ENCODE measurements at regions of chr19 and their contacts with region 1.

Region 1: DNA sequence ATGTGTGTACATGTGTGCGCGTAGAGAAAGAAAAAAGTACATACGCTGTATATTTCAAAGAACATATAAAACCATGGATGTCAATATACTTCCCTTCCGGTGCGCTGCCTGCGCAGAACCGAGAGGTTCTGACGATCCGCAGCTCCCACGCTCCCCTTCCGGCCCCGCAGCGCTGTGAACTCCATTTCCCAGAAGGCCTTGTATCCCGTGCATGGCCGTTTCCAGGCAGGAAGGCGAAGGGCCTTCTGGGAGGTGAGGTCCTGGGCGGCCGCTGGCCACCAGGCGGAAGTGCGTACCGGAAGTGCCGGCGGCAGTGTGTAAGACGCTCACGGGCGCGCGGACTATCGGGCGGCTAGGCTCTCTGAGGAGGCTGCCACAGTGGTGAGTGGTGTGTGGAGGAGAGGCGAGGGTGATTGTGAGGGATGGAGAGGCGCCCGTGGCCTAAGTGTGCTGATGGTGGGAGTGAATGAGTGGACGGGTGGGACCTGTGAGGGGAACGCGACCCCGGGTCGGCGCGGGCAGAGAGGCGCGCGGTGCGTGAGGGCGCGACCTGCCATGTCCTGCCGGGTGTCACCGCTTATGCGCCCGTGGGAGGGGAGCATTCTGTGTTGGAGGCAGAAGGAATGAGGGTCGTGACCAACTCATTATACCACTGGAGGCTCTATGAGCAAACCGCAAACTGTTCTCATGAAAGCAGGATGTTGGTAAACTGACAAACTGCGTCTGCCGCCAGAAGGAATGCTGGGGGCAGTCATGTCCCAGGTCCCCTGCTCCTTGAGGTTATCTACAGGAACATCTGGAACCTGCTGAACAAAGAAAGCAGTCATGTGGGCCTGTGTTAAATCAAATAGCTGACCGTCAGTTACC is at the start of gene ERVK3-1:
- DNase-seq: peak; percentile 95
- H3K4me3 Mint-ChIP-seq: peak within 1 kb of the TSS; percentile 97
- H3K27ac Mint-ChIP-seq: peak within 1 kb of the TSS; percentile 96
- H3K4me1 Mint-ChIP-seq: peaks cover 43% of the 10 kb centered on the region
- H3K27me3 Mint-ChIP-seq: no peaks in the 10 kb centered on the region
- total RNA-seq, gene ERVK3-1: 87.1 and 96.7 TPM in 2 replicates

Region 2: DNA sequence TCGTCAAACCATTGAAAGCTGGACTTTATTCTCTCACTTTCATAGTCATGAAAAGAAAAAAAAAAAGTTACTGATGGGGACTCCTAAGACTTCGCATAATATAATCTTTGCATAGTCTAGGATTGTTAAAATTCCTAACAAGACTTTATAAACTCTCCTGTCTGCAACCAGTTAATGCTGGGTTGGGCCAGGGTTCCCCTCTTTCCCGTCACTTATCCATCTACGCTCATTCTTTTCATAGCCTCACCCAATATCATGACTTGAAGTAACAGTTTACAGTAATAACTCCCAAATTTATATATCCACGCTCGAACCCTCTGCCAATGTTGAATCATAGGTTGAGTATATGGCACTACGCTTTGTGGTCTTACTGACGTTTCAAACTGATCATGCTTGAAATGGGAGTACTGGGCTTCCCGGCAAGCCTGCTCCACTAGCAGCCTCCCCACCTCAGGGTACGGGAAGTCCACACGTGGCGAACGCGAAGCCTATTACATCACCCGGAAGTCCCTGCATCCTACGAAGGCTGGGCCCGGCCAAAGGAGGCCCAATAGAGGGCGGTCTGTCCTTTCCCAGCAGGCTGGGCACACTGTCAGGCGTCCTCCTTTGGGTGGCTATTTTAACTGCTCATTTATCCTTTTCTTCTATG is 1025.8 kb before region 1 on chr19:
- intact Hi-C with region 1: loop called (anchors 10 kb)
- DNase-seq: peak; percentile 75
- H3K4me3 Mint-ChIP-seq: no peak overlapping the region
- H3K27ac Mint-ChIP-seq: no peak overlapping the region
- H3K4me1 Mint-ChIP-seq: peaks cover 23% of the 10 kb centered on the region
- H3K27me3 Mint-ChIP-seq: peaks cover 2% of the 10 kb centered on the region

Region 3: DNA sequence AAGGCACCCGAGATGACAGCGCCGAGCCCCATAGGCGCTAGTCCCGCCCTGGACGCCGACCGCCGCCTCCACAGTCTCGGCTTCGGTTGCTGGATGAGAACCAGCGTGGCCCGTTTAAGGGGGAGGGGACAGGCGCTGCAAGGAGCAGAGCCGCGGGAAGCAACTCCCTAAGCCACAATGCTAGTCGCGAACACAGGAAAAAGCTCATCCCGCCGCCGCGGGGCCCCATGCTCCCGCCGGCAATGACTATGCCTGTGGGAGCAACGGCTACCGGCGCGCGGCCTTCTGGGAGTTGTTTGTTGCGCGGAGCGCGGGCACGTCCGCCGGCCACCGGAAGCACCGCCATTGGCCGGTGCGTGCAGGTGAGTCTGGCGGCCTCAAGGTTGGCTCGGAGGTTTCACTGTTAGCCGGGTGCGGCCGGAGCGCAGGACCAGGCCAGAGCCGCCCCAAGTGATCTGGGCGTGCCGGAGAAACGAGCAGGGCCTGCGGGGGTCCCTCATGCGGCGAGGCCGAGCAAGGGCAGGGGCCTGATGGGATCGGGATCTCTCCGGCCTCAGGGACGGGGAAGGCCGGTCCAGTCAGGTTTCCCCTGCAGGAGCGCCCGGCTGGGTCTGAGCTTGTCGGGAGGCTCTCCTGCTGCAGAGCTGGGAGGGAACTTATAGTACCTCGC is 76.6 kb before region 1 on chr19 and contains the start of gene ZNF544:
- intact Hi-C with region 1: loop called (anchors 1 kb)
- DNase-seq: peak; percentile 60
- H3K4me3 Mint-ChIP-seq: peak within 1 kb of the TSS; percentile 89
- H3K27ac Mint-ChIP-seq: peak within 1 kb of the TSS; percentile 96
- H3K4me1 Mint-ChIP-seq: peaks cover 32% of the 10 kb centered on the region
- H3K27me3 Mint-ChIP-seq: no peaks in the 10 kb centered on the region
- total RNA-seq, gene ZNF544: 51.8 and 56.1 TPM in 2 replicates

Region 4: DNA sequence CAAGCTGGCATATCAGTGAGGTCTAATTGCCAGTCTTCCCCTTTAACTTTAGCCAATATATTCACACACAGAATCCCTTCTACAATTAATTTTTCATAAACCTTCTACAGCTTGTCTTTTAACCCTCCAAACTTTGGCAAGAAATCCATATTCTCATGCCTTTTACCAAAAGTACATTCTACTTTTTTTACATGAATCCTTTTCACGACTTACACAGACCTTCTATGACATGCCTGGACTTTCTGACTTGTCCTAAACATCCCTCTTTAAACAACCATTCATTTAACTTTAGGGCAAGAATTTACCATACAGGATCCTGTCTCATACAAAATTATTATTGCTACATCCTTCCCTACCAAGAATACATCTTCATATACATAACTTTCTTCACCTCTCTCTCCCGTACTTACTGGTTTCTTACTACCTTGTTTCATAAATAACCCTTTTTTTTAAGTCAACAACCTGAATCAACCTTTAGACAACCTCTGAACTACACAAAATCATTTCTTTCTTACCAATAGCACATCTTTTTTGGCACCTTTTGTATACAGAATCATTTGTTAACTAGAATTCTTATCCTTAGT is 53.1 kb before region 1 on chr19:
- intact Hi-C with region 1: no loop called
- DNase-seq: no peak
- H3K4me3 Mint-ChIP-seq: no peak overlapping the region
- H3K27ac Mint-ChIP-seq: no peak overlapping the region
- H3K4me1 Mint-ChIP-seq: no peaks in the 10 kb centered on the region
- H3K27me3 Mint-ChIP-seq: no peaks in the 10 kb centered on the region

Region 5: GRCh38 chr19:58338825-58339558 is 33.7 kb after region 1 on chr19:
- intact Hi-C with region 1: no loop called
- DNase-seq: no peak
- H3K4me3 Mint-ChIP-seq: no peak overlapping the region
- H3K27ac Mint-ChIP-seq: no peak overlapping the region
- H3K4me1 Mint-ChIP-seq: peaks cover 6% of the 10 kb centered on the region
- H3K27me3 Mint-ChIP-seq: no peaks in the 10 kb centered on the region

Region 6: DNA sequence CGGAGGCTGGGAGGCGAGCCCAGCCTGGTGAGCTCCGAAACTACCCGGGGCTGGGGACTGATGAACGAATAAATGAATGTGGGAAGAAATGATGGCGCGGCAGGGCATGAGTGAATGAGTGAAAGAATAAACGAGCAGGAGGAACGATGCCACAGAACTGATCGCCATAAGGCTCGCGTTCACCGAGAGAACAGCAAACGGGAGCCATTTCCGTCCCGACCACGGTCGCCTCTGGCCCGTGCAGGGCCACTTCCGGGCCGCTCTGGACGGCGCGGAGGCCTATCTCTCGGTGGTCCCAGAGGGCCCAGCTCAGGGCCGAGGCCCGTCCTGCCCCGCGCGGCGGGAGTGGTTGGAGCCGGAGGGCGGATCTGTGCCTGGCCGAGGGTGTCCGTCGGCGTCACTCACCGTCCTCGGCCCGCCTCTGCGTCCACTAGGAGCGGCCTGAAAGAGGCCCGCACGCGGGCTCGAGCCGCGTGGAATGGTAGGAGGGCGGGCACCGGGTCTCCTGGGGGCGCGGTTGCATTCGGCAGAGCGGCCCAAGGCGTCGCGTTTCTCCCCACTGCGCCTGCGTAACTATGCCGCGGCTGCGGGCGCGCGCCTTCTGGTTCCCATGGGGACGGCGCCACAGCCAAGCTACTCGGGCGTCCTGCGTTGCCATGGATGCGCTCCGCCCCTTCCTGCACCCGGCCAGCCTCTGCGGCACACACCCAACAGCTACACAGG is 57.1 kb after region 1 on chr19 and contains the start of gene ZNF497:
- intact Hi-C with region 1: loop called (anchors 1 kb)
- DNase-seq: peak; percentile 95
- H3K4me3 Mint-ChIP-seq: peak within 1 kb of the TSS; percentile 94
- H3K27ac Mint-ChIP-seq: peak within 1 kb of the TSS; percentile 95
- H3K4me1 Mint-ChIP-seq: peaks cover 7% of the 10 kb centered on the region
- H3K27me3 Mint-ChIP-seq: no peaks in the 10 kb centered on the region
- total RNA-seq, gene ZNF497: 0.76 and 0.93 TPM in 2 replicates

Region 7: GRCh38 chr19:58439576-58440554 is 134.6 kb after region 1 on chr19 and contains the start of gene ZNF132:
- intact Hi-C with region 1: loop called (anchors 1 kb)
- DNase-seq: peak; percentile 94
- H3K4me3 Mint-ChIP-seq: peak within 1 kb of the TSS; percentile 97
- H3K27ac Mint-ChIP-seq: peak within 1 kb of the TSS; percentile 98
- H3K4me1 Mint-ChIP-seq: peaks cover 24% of the 10 kb centered on the region
- H3K27me3 Mint-ChIP-seq: no peaks in the 10 kb centered on the region
- total RNA-seq, gene ZNF132: 3.4 and 3.5 TPM in 2 replicates

Region 8: GRCh38 chr19:58499021-58499927 is 194.0 kb after region 1 on chr19:
- intact Hi-C with region 1: loop called (anchors 1 kb)
- DNase-seq: peak; percentile 96
- H3K4me3 Mint-ChIP-seq: peak overlapping the region; percentile 91
- H3K27ac Mint-ChIP-seq: peak overlapping the region; percentile 91
- H3K4me1 Mint-ChIP-seq: peaks cover 21% of the 10 kb centered on the region
- H3K27me3 Mint-ChIP-seq: peaks cover 7% of the 10 kb centered on the region